ENCODE measurements at regions of chr3 and their contacts with region 1.

Region 1: GRCh38 chr3:17639765-17640164 is 102.7 kb downstream of the TBC1D5 start:
- DNase-seq: no peak
- H3K4me3 ChIP-seq: no peak overlapping the region
- H3K27ac ChIP-seq: peak overlapping the region; percentile 42
- H3K4me1 ChIP-seq: peaks cover 32% of the 10 kb centered on the region
- H3K27me3 ChIP-seq: no peaks in the 10 kb centered on the region
- CTCF ChIP-seq: no peak
- POLR2A ChIP-seq: no peak

Region 2: DNA sequence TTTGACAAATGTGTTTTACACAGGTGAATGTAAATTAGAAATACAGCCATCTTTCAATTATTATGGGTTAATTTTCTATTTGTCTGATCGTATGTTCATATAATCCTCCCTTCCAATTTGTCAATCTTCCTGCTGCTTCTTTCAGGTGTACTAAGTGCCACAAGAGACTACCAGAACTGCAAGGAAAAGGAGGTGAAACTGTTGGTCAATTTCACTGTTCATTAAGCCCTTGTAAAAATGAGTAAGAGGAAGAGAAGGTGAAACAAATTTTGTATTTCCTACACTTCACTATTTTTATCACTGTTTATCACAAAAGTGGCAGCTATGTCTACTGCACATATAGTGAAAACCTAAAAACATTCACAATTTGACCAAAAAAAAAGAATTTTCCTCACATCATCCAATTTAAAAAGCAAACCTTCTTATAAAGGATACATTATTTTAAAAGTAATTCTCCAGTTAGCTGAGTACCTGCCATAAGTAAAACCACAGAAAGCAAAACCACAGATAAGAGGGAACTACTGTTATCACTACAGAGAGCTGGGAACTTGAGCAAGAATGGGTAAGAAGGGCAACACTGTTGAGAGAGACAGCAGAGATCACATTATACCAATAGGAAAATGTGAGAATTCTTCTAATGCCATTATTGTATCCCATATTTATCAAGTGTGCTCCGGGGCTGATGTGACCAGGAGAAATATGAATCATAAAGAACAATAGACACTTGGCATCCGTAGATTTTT is 60.3 kb before region 1 on chr3:
- CTCF ChIA-PET with region 1: interaction called, 4 read pairs
- POLR2A ChIA-PET with region 1: no interaction called
- dilution Hi-C with region 1: no loop called
- intact Hi-C with region 1: loop called (anchors 5 kb)
- DNase-seq: peak; percentile 62
- H3K4me3 ChIP-seq: no peak overlapping the region
- H3K27ac ChIP-seq: no peak overlapping the region
- H3K4me1 ChIP-seq: peaks cover 16% of the 10 kb centered on the region
- H3K27me3 ChIP-seq: no peaks in the 10 kb centered on the region
- CTCF ChIP-seq: no peak
- POLR2A ChIP-seq: no peak